Activated CD8-positive, alpha-beta T cell treated with anti-CD3 and anti-CD28 coated beads, Interleukin-2, amount 10 ng/mL, durations not matched to agents 7 days and 5 days (primary cell): ENCODE measurements at regions of chr17 and their contacts with region 1.

Region 1: GRCh38 chr17:78708510-78708973 is 73.5 kb downstream of the CYTH1 start:
- DNase-seq: peak; percentile 70
- ATAC-seq: peak; percentile 81
- H3K4me3 Mint-ChIP-seq: peak overlapping the region; percentile 39
- H3K27ac Mint-ChIP-seq: peak overlapping the region; percentile 64
- H3K4me1 Mint-ChIP-seq: peaks cover 48% of the 10 kb centered on the region
- H3K27me3 Mint-ChIP-seq: no peaks in the 10 kb centered on the region

Region 2: GRCh38 chr17:78497115-78497540 is 211.4 kb before region 1 on chr17:
- CTCF ChIA-PET with region 1: interaction called, 16 read pairs
- POLR2A ChIA-PET with region 1: no interaction called
- DNase-seq: peak; percentile 67
- ATAC-seq: peak; percentile 73
- H3K4me3 Mint-ChIP-seq: no peak overlapping the region
- H3K27ac Mint-ChIP-seq: no peak overlapping the region
- H3K4me1 Mint-ChIP-seq: no peaks in the 10 kb centered on the region
- H3K27me3 Mint-ChIP-seq: no peaks in the 10 kb centered on the region

Region 3: DNA sequence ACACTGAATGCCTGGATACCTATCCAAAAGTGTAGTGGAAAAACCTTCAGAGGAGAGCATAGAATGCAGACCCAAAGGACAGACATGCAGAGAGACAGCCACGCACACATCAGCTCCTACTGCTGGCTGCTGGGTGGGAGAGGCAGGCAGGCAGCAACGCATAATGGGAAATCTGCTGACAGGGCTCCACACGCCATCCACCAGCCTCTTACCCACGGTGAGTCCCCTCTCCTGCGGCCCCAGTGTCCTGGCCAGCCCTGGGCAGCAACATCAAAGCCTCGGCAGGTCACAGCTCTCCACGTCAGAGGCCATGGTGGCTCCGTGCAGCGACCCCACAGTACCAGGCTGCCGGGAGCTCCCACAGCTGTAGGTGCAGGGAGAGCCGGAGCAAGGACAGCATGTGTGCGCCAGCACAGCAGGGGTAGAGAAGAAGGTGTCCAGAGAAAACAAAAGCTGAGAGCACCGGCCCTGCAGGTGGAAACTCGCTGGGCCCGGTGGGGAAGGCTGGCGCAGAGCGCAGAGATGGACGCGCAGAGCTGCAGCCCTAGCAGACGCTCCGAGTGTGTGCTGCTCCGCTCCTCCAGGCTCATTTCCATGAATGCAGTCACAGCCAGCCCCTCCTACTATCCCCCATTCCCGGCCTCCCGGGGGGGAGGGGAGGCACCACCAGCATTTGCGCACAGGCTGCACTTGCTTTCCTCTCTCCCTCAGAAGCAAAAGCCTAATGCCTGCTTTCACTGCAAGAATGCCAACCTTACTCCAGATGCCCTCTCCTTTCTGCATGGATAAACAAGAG is 14.7 kb after region 1 on chr17:
- CTCF ChIA-PET with region 1: interaction called, 23 read pairs
- POLR2A ChIA-PET with region 1: interaction called, 11 read pairs
- DNase-seq: no peak
- ATAC-seq: no peak
- H3K4me3 Mint-ChIP-seq: no peak overlapping the region
- H3K27ac Mint-ChIP-seq: peak overlapping the region; percentile 65
- H3K4me1 Mint-ChIP-seq: peaks cover 88% of the 10 kb centered on the region
- H3K27me3 Mint-ChIP-seq: no peaks in the 10 kb centered on the region

Region 4: DNA sequence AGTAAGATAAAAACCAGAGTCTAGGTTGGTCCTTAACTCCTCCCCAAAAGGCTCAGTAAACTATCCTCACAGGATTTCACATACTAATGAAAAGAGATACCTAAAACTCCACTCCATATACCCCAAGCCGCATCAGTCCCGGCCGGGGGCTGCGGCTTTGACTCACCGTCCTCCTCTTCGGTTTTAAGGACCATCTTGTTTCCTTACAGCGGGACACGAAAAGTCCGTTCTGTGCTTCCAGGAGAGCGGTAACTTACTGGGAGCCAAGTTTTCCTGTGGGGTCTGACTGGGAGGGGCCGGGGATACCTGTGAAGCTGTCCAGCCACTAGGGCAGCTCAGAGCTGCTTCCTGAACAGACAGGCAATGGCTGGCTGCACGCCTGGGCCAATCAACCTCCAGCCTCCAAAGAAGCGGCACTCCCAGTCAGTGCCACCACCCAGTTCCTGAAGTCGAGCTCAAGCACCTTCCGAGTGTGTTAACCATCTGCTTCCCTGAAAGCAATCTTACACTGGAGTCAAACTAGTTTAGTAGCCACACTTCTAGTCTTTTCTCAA is 28.1 kb after region 1 on chr17:
- CTCF ChIA-PET with region 1: interaction called, 31 read pairs
- POLR2A ChIA-PET with region 1: interaction called, 10 read pairs
- DNase-seq: peak; percentile 71
- ATAC-seq: peak; percentile 86
- H3K4me3 Mint-ChIP-seq: peak overlapping the region; percentile 83
- H3K27ac Mint-ChIP-seq: peak overlapping the region; percentile 91
- H3K4me1 Mint-ChIP-seq: peaks cover 87% of the 10 kb centered on the region
- H3K27me3 Mint-ChIP-seq: no peaks in the 10 kb centered on the region

Region 5: GRCh38 chr17:78879635-78880186 is 171.2 kb after region 1 on chr17:
- CTCF ChIA-PET with region 1: no interaction called
- POLR2A ChIA-PET with region 1: no interaction called
- DNase-seq: peak; percentile 39
- ATAC-seq: peak; percentile 30
- H3K4me3 Mint-ChIP-seq: peak overlapping the region; percentile 60
- H3K27ac Mint-ChIP-seq: peak overlapping the region; percentile 81
- H3K4me1 Mint-ChIP-seq: peaks cover 36% of the 10 kb centered on the region
- H3K27me3 Mint-ChIP-seq: peaks cover 4% of the 10 kb centered on the region